GM23248 (cell line): ENCODE measurements at regions of chr1 and their contacts with region 1.

Region 1: GRCh38 chr1:218546309-218546708 is 201.2 kb downstream of the TGFB2 start:
- DNase-seq: peak; percentile 38
- H3K4me3 ChIP-seq: no peak overlapping the region
- H3K27ac ChIP-seq: no peak overlapping the region
- H3K4me1 ChIP-seq: no peaks in the 10 kb centered on the region
- H3K27me3 ChIP-seq: no peaks in the 10 kb centered on the region

Region 2: DNA sequence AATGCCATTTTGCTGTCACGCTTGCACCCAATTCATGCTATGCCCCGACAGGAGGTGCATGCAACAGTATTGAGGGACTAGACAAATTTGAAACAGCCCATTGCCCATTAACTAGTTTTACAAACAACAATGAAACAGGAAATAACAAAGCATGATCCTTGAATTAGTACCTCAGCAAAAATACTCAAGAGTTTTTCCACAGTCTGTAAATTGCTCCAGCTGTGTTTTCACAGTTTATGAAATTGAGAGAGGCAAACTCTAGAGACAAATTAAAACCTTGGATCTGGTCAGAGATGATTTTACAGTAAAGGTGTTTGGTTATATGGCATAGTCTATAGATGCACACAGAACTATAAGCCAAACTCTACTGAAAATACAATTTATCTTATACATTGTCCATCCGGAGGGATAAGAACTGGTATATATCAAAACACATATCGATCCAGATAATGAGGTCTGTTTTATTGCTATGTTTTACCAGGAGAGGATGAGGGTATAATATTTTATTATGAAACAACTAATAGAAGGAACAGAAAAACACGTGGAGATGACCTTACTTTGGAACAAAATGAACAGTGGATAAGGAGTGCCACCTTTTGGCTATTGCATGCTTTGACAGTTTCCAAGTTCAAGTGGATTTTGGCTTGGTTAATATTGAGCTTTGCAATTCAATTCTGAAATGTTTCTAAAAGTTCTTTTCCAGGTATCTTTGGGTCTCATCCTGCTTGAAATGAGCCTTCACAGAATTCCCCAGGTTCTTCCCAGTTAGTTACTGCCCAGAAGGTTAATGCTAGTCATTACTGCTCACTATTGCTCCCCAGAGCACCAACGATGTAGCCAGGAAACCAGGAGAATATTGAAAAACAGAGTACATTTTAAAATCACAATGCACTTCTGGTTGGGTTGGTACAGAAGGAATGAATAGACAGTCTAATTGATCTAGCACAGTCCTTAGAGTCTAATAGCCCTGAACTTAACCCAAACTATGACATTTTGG is 1020.9 kb after region 1 on chr1:
- in situ Hi-C with region 1: loop called (anchors 25 kb)
- DNase-seq: peak; percentile 75
- H3K4me3 ChIP-seq: no peak overlapping the region
- H3K27ac ChIP-seq: no peak overlapping the region
- H3K4me1 ChIP-seq: no peaks in the 10 kb centered on the region
- H3K27me3 ChIP-seq: peaks cover 8% of the 10 kb centered on the region; the same call in 1 of the 2 replicates